CD14-positive monocyte (primary cell): ENCODE measurements at regions of chr19 and their contacts with region 1.

Region 1: GRCh38 chr19:55339048-55339888 is at the start of gene KMT5C:
- DNase-seq: peak; percentile 100
- H3K4me3 ChIP-seq: peak within 1 kb of the TSS; percentile 48 to 83 (median 69)
- H3K4me3 Mint-ChIP-seq: peak within 1 kb of the TSS; percentile 82 to 90
- H3K27ac ChIP-seq: peak within 1 kb of the TSS; percentile 97 to 99
- H3K27ac Mint-ChIP-seq: peak within 1 kb of the TSS; percentile 97 to 99 (median 99)
- H3K4me1 ChIP-seq: peaks cover 31 to 39% of the 10 kb centered on the region in 2 donors
- H3K4me1 Mint-ChIP-seq: peaks cover 27% of the 10 kb centered on the region
- H3K27me3 ChIP-seq: no peaks in the 10 kb centered on the region
- H3K27me3 Mint-ChIP-seq: peaks cover 0 to 5% (median 2%) of the 10 kb centered on the region in 3 donors
- CTCF ChIP-seq: peak; percentile 12
- polyA plus RNA-seq, gene KMT5C: 0.89 to 26.9 (median 1.5) TPM

Region 2: DNA sequence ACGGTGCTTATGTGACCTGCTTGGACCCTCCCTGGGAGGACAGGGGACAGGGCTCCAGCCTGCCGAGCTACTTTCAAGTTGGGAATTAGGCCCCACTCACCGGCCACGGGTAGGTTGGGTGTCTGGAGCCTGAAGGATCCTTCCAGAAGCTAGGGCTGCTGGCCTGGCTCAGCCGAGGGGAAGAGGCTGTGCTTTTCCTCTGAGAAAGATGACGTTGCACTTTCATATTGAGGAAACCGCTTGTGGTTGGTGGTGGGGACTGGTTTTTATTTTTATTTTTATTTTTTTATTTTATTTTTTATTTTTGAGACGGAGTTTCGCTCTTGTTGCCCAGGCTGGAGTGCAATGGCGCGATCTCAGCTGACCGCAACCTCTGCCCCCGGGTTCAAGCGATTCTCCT is 14.1 kb before region 1 on chr19 and contains the start of gene TMEM150B:
- intact Hi-C with region 1: loop called in 1 of 2 experiments (anchors 2 kb)
- DNase-seq: peak; percentile 48 to 71 (median 71)
- H3K4me3 ChIP-seq: peak within 1 kb of the TSS; percentile 44 to 79 (median 77)
- H3K4me3 Mint-ChIP-seq: peak within 1 kb of the TSS; percentile 89 to 97
- H3K27ac ChIP-seq: peak within 1 kb of the TSS; percentile 85 to 93
- H3K27ac Mint-ChIP-seq: peak within 1 kb of the TSS; percentile 96 to 99 (median 98)
- H3K4me1 ChIP-seq: peaks cover 72 to 86% of the 10 kb centered on the region in 2 donors
- H3K4me1 Mint-ChIP-seq: peaks cover 70% of the 10 kb centered on the region
- H3K27me3 ChIP-seq: no peaks in the 10 kb centered on the region
- H3K27me3 Mint-ChIP-seq: peaks cover 0 to 1% (median 1%) of the 10 kb centered on the region in 3 donors
- CTCF ChIP-seq: no peak
- polyA plus RNA-seq, gene TMEM150B: 10.1 to 65.6 (median 11.2) TPM